Kidney (tissue), 22 donors: ENCODE measurements at regions of chr11 and their contacts with region 1.

Region 1: DNA sequence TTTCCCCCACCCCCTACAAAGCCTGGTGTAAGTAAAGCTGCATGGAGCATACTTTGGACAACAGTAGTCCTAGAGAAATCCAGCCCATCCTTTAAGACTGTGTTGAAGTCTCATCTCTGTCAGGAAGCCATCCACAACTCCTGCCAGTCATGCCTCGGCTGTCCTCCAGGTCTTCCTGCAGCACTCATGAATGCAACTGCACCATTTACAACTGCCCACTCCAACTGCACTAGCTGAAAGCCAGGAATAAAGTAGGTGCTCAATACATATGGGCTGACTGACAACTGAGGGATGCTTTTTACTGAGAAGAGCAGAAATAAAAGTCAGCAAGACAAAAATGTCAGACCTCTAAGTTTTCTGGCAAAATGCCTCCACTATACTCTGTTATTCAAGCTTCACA is 27.4 kb downstream of the IL18BP start:
- DNase-seq: no peak
- H3K4me3 ChIP-seq: no peak overlapping the region
- H3K27ac ChIP-seq: no peak overlapping the region
- H3K4me1 ChIP-seq: peaks cover 0 to 33% (median 30%) of the 10 kb centered on the region in 3 donors
- H3K27me3 ChIP-seq: no peaks in the 10 kb centered on the region
- CTCF ChIP-seq: no peak

Region 2: DNA sequence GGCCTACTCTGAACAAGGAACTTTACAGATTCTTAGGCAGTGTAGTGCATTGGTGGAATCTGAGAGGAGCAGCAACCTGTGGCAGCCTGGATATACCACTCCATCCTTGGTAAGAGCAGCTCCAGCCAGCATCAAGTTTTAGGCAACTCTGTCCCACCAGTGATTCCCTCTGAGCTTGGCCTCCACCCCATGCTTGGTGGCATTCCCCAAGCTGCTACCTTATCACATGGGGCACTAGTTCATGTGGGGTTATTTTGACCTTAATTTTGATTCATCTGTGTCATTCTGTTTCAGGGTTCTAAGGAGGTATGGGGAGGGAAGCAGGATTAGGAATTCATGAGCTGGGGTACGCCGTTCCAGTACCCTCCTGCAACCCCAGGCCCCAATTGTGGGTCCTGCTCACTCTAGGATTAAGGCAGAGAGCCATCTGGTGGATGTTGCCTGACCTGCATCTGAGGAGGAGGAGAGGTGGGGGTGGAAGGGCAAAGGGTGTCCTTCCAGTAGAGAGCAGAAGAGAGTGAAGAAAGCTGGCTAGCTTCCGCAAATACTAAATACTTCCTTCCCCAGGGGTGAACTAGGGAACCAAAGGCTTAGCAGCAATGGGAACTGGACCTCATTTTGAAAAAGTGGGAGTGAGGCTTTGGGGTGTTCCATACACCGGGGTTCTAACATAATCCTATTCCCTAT is 65.1 kb after region 1 on chr11:
- intact Hi-C with region 1: loop called (anchors 5 kb)
- DNase-seq: peak in 4 of 5 donors; percentile 76 to 89 (median 77)
- H3K4me3 ChIP-seq: no peak overlapping the region
- H3K27ac ChIP-seq: peak overlapping the region in 1 of 2 donors; percentile 20
- H3K4me1 ChIP-seq: peaks cover 0 to 11% (median 0%) of the 10 kb centered on the region in 3 donors
- H3K27me3 ChIP-seq: no peaks in the 10 kb centered on the region
- CTCF ChIP-seq: peak; percentile 94